Heart right ventricle (tissue), 16 donors: ENCODE measurements at regions of chr12 and their contacts with region 1.

Region 1: DNA sequence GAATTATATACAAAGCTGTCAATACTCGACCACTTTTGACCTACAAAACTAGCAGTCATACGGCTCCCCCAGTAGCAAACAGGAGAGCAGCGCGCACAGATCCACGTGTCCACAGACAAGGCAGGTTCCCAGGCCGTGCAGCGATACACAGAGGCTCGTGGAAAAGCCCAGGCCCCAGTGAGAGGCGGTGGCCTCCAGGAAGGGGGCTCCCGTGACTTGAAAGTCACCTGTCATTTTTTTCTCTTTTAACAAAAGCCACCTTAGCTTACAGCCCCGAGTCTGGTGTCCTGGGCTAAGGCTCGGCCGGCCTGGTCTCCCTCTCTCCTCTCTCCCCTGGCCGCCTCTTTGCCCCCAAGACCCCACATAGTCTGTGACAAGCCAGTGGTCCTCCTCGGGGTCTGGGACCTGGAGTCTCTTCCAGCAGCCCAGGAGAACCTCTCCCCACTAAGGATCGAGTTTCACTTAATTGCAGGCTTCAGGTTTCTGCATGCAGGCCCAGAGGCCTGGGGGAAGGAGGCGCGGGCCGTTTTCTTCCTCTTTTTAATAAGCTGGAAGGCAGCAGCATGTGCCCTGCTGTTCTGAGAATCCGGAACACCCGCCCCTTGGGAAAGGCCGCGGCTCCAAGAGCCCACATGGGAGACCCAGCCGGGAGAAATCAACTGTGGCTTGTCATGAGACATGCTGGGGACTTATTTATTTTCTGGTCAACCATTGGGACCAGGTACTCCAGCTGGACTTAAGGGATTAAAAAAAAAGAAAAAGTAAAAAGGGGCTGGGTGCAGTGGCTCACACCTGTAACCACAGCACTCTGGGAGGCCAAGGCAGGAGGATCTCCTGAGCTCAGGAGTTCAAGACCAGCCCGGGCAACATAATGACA is 15.9 kb downstream of the NCOR2 start:
- DNase-seq: peak; percentile 66 to 71
- ATAC-seq: peak in 6 of 8 donors; percentile 4 to 56 (median 41)
- H3K4me3 ChIP-seq: no peak overlapping the region
- H3K27ac ChIP-seq: peak overlapping the region in 8 of 10 donors; percentile 10 to 77 (median 31)
- H3K4me1 ChIP-seq: peaks cover 54 to 95% (median 81%) of the 10 kb centered on the region in 9 donors
- H3K27me3 ChIP-seq: no peaks in the 10 kb centered on the region
- CTCF ChIP-seq: no peak

Region 2: GRCh38 chr12:124311292-124312109 is 240.0 kb before region 1 on chr12:
- intact Hi-C with region 1: no loop called
- DNase-seq: no peak
- ATAC-seq: no peak
- H3K4me3 ChIP-seq: no peak overlapping the region
- H3K27ac ChIP-seq: no peak overlapping the region
- H3K4me1 ChIP-seq: no peaks in the 10 kb centered on the region
- H3K27me3 ChIP-seq: no peaks in the 10 kb centered on the region
- CTCF ChIP-seq: no peak

Region 3: DNA sequence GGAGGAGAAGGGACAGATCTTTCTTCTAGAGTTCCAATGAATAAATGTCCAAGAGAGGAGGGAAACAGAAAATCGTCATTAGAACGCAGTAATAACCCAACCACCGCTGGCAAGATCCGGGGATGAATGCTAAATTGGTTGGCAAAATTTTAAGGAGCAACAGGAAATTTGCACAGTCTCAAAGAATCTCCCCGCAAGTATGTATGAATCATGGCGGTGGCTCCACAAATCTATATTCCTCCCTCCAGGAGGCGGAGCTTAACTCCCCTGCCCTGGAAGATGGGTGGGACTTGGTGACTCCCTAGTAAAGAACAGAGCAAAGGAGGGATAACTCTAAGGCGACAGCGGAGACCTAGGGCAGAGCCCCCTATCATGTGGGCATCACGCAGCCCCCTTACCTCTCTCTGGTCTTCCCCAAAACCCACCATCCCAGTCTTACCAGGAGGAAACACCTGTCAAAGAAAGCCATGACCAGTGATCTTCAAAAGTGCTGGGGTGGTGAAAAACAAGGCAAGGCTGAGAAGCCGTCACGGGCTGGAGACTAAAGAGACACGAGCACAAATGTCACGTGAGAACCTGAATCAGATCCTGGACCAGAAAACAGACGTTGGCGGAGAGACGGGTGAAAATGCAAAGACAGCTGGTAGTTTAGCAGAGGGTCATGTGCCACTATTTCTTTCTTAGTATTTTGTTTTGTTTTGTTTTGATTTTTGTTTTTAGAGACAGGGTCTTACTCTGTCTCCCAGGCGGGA is 109.9 kb before region 1 on chr12:
- intact Hi-C with region 1: loop called in 1 of 10 experiments (anchors 5 kb)
- DNase-seq: no peak
- ATAC-seq: peak in 3 of 8 donors; percentile 31 to 41 (median 39)
- H3K4me3 ChIP-seq: no peak overlapping the region
- H3K27ac ChIP-seq: peak overlapping the region in 9 of 10 donors; percentile 19 to 81 (median 56)
- H3K4me1 ChIP-seq: peaks cover 15 to 67% (median 36%) of the 10 kb centered on the region in 9 donors
- H3K27me3 ChIP-seq: no peaks in the 10 kb centered on the region
- CTCF ChIP-seq: no peak